Colonic mucosa (tissue), 4 donors: ENCODE measurements at regions of chr7 and their contacts with region 1.

Region 1: DNA sequence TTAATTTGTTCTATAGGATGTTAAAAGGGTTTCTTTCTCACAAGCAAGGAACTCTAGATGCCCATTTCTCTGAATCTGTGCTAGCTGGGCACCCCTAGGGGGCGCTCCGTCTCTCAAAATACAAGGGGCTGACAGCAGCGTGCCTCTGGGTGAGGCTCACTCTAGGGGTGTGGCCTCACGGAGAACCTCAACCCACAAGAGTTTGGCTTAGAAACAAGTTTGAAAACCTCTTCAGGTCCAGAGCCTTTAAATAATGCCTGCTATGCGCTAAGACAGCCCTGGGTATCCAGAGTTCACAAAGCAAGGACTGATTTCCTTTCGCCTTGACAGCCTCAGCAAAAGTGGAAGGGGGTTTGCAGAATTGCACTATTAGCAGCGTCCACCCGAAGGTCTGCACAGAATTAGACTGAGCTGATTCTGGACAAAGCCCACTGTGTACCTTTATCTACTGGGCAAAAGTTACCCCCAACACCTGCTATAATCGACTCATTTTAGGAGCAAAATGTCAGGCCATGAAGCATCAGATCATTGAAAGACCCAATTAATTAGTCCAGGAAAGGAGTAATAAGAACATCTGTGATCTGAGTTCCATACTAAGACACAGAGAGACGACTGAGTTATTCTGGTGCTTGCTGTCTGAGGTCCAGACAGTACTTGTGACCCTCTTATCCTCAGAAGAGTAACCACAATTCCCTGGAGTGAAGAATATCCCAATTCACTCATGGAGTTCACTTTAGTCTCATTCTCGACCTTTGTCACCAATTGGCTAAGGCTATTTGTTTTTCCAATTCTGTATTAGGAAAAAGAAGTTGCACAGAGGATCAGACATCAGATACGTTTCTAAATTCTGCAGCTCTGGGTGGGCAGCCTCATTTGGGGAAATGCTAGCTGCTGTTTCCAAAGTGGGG is 574 bp upstream of the CPED1 start:
- DNase-seq: peak; percentile 91
- H3K4me3 ChIP-seq: peak overlapping the region; percentile 33
- H3K27ac ChIP-seq: peak overlapping the region; percentile 75
- H3K4me1 ChIP-seq: peaks cover 5% of the 10 kb centered on the region
- H3K27me3 ChIP-seq: no peaks in the 10 kb centered on the region
- CTCF ChIP-seq: peak; percentile 97

Region 2: DNA sequence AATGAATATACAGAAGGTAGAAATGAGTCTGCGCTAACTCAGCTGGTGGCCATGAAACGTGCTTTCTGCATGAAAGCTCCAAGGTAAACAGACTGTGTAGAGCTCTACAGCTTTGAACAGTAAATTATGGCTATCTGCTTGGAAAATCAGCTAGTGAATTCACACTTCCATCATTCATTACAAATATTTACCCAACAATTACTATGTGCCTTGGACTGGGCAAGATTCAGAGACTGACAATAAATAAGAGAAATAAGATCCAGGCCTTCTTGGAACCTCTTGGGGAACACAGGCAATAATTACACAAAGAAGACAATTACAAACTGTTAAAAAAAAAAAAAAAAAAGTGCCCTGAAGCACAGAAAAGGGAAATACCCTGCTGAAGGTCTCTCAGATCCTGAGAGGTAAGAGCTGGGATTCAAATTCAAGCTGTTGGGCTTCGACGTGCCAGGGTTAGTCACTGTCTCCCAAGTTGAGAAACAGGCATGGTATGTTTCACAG is 145.8 kb before region 1 on chr7:
- intact Hi-C with region 1: no loop called
- DNase-seq: no peak
- H3K4me3 ChIP-seq: no peak overlapping the region
- H3K27ac ChIP-seq: no peak overlapping the region
- H3K4me1 ChIP-seq: no peaks in the 10 kb centered on the region
- H3K27me3 ChIP-seq: no peaks in the 10 kb centered on the region
- CTCF ChIP-seq: no peak

Region 3: GRCh38 chr7:121081327-121081936 is 93.5 kb after region 1 on chr7:
- intact Hi-C with region 1: loop called (anchors 2 kb)
- DNase-seq: no peak
- H3K4me3 ChIP-seq: no peak overlapping the region
- H3K27ac ChIP-seq: no peak overlapping the region
- H3K4me1 ChIP-seq: no peaks in the 10 kb centered on the region
- H3K27me3 ChIP-seq: no peaks in the 10 kb centered on the region
- CTCF ChIP-seq: peak; percentile 68